GM13976 (cell line): ENCODE measurements at regions of chr17 and their contacts with region 1.

Region 1: DNA sequence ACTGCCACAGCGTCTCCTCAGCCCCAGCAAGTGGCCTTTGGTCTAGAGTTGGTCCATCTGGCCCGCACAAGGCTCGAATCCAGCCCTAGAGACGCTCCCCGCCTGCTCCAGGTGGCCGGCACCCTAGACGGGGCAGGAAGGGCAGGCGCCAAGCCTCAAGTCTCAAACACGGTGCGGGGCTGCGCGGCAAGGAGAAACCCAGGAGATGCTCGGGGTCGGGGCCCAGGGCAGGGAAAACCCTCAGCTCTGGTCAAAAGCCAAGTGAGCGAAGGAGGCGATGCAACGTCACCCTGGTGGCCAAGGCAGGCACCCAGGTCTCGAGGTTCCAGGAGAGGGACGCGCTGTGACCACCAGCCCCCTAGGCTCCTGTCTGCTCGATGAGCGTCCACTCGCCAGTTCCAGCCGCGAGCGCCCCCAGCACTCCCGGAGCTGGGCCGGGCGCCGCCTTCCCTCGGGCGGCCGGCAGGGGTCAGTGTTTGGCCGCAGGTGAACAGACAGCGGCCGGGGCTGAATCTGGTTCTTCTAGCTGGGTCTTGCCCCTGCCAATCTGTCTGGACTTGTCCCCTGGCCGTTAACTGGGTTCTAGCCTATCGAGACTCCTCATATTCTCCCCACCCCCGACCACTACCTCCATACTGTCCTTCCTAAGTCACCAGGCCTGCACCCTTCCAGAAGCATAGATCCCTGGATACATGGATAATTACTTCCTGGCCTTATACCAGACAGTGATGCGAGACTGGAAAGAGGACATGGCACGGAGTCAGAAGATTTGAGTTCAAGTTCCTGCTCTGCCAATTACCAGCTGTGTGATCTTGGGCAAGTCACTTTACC is 44.0 kb downstream of the PRAC1 start:
- DNase-seq: peak; percentile 88
- CTCF ChIP-seq: peak; percentile 92

Region 2: DNA sequence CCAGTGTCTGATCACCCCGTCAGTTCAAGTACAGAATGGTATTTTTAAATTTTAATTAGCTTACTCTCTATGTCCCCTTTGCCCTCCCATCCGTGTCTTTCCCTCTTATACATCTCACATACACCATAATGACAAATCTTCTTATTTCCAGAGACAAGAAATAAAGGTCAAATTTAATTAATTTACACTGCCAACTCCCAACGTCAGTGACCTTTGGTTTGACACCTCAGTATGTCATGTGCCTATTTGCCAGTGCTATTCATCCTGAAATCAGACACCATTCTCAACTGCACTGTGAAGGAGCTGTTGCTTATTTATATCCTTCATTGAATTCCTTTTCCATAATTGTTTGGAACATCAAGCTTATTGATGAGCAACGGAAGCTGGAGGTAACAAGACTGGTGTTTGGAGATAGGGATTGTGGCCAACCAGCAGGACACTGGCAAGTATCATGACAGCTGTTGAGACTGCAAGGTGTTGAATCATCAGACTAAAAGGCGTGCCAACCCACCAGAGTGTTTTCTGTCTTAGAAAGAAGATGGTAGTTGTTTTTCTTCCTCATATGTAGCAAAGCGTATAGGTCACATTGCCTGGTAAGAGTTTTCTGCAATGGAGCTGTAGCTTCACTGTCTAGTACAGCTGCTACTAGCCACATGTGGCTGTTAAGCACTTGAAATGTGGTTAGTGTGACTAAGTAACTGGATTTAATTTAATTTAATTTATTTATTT is 165.0 kb after region 1 on chr17:
- in situ Hi-C with region 1: no loop called
- DNase-seq: no peak
- CTCF ChIP-seq: no peak

Region 3: DNA sequence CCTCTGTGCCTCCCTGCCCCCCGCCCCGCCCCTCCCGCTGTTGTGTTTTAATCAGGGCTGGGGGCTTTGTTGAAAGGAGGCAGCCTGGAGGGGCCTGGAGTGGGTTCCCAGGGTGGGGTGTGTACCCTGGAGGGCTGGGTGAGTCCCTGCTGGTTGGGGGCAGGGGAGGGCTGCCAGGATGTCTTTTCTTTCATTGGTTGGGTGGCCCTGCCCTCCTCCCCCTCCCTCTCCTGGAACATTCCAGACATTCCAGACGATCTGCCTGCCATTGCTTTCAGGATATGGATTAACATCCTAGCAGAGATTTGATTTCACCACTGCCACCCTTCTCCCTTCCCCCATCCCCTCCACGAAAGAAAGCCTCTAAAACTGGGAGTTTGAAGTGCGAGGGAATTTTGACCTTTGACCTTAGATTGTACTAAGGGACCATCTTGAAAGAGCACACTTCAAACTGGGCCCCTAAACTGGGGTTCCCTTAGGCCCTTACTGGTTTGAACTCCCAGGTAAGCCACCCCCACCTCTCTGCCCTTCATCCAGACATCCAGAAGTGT is 344.1 kb after region 1 on chr17:
- in situ Hi-C with region 1: loop called (anchors 10 kb)
- DNase-seq: no peak
- CTCF ChIP-seq: no peak